ENCODE measurements at regions of chr16 and their contacts with region 1.

Region 1: DNA sequence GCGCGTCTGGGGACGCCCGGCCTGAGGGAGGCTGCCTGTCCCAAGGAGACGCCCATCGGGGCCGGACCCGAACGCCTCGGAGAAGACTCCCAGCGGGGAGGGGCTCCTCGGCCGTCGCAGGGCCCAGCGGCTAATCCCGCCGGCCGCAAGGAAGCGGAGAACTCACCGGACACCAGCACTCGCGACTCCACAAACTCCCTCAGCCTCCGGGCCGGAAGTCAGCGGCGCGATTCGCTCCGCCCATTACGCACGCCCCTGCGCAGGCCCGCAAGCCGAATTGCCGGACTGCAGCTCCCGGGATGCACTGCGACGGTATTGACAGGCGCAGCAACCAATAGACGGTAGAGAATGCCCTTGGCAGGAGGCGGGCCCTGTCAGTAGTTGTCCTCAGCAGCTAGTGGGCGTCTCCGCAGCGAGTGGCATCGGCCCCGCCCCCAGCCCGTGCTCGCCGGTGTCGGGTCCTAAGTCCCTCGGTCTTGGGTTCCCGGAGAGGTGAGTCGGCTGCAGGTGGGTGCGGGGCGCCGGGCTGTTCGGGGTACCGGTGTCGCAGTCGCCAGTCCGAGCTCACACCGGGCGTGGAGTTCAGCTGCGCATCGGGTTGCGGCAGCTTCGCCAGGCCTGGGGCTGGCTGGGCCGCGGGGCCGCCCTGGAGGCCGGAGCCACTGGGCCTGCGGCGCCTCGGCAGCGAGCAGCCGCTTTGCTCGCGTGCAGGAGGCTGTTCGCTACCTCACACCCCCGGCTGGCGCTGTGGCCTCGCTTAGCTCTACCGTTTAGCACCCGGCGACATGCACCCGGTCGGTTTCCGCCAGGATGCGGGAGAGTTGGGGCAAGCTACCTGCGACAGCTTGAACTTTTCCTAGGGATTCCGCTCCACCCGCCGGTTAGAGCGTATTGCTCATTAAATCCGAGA is at the starts of genes ZNF174 and ZSCAN32:
- DNase-seq: peak; percentile 98 to 100 (median 98)
- ATAC-seq: peak; percentile 99
- H3K4me3 ChIP-seq: peak within 1 kb of the TSS; percentile 89
- H3K27ac ChIP-seq: peak within 1 kb of the TSS; percentile 81
- H3K4me1 ChIP-seq: peaks cover 2 to 16% of the 10 kb centered on the region in 2 experiments; a peak in 4 of 5 replicates
- H3K27me3 ChIP-seq: no peaks in the 10 kb centered on the region
- CTCF ChIP-seq: no peak
- EP300 ChIP-seq: 0 out of 2 replicates have a peak, but pooled peaks have one; percentile 3
- POLR2A ChIP-seq: peak; percentile 86
- RAD21 ChIP-seq: peak in 1 of 2 experiments; percentile 19; a peak in 2 of 4 replicates
- polyA plus RNA-seq, gene ZNF174: 5.1 to 8.3 TPM
- polyA plus RNA-seq, gene ZSCAN32: 16.0 to 24.6 TPM

Region 2: DNA sequence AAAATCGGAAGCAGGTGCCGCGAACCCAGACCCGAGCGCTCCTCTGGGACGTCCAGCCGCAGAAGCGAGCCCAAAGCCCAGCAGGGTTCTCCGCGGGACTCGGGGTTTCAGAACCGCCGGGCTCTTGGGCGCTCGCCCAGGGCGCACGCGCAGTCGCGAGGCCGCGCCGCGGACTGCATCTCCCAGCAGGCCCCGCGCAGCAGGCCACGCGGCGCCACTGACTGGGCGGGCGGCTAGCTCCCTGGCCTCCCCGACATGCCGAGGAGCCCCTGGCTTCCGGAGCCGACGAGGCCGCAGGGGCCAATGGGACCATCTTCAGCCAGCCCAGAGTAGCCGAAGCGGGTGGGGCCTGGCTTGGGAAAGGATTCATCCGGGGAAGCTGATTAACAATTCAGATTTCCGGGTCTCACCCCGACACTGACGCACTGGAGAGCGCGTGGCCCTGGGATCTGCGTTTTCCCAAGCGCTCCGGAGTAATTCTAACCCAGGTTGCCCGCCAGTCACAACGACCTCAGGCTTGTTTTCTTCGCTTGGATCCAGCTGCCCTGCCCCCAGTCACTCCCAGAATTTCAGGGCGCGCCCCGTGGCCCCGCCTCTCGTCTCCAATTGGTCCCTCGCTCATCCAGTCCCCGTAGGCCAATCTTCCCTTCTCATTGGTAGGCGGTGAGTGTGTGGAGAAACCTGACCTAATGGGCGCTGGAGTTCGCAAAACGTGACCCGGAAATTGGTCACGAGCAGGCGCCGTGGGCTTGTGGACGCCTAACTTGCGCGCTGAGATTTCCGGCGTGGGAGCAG is 118.1 kb before region 1 on chr16 and contains the start of gene ZNF263:
- CTCF ChIA-PET with region 1: no interaction called
- POLR2A ChIA-PET with region 1: interaction called, 15 read pairs
- in situ Hi-C with region 1: no loop called
- intact Hi-C with region 1: no loop called
- DNase-seq: peak; percentile 94 to 98 (median 97)
- ATAC-seq: peak; percentile 97
- H3K4me3 ChIP-seq: peak within 1 kb of the TSS; percentile 93
- H3K27ac ChIP-seq: peak within 1 kb of the TSS; percentile 100
- H3K4me1 ChIP-seq: peaks cover 8 to 22% of the 10 kb centered on the region in 2 experiments; a peak in 4 of 5 replicates
- H3K27me3 ChIP-seq: no peaks in the 10 kb centered on the region
- CTCF ChIP-seq: no peak
- EP300 ChIP-seq: no peak; the same call in 1 of the 2 replicates
- POLR2A ChIP-seq: peak; percentile 91
- RAD21 ChIP-seq: no peak
- polyA plus RNA-seq, gene ZNF263: 4.6 to 4.8 TPM

Region 3: GRCh38 chr16:3305109-3306068 is 95.6 kb before region 1 on chr16 and contains the starts of genes TIGD7 and ZNF75A:
- CTCF ChIA-PET with region 1: no interaction called
- POLR2A ChIA-PET with region 1: interaction called, 6 read pairs
- in situ Hi-C with region 1: no loop called
- intact Hi-C with region 1: loop called (anchors 10 kb)
- DNase-seq: peak; percentile 81 to 91 (median 84)
- ATAC-seq: peak; percentile 99
- H3K4me3 ChIP-seq: peak within 1 kb of the TSS; percentile 73
- H3K27ac ChIP-seq: peak within 1 kb of the TSS; percentile 94
- H3K4me1 ChIP-seq: peaks cover 0 to 16% of the 10 kb centered on the region in 2 experiments; a peak in 4 of 5 replicates
- H3K27me3 ChIP-seq: no peaks in the 10 kb centered on the region
- CTCF ChIP-seq: peak in 1 of 3 experiments; percentile 16; a peak in 1 of 6 replicates
- EP300 ChIP-seq: no peak
- POLR2A ChIP-seq: peak; percentile 95
- RAD21 ChIP-seq: no peak; a peak in 1 of 4 replicates
- polyA plus RNA-seq, gene TIGD7: 0.84 to 2.0 TPM
- polyA plus RNA-seq, gene ZNF75A: 7.2 to 10.1 TPM

Region 4: DNA sequence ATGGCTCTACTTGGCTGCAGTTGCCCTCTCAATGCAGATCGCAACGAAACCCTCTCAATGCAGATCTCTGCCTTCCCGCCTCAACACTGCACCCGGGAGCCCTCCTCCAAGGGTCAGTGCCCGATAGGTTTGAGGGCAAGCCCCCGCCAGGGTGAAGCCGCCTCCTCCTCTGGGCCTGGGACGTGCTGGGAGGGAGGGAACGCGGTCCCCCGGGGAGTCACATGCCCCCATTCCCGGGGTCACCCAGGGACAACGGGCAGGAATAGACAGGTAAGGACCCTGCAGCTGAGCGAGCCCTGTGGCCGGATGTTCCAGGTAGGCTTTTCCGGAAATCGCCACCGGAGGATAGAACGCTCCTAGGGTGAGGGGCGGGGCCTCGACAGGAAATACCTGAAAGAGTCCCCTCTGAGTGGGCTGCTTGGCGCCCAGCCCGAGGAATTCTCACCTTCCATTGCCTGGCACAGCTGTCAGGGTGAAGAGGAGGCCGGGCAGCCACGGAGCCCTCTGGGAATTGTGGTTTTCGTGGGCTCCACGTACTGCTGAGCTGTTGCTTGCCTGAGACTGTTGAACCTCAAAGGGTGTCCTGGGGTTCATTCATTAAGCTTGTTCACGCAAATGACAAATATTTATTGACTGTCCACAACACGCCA is 12.8 kb after region 1 on chr16:
- CTCF ChIA-PET with region 1: no interaction called
- POLR2A ChIA-PET with region 1: interaction called, 10 read pairs
- in situ Hi-C with region 1: no loop called
- intact Hi-C with region 1: no loop called
- DNase-seq: no peak
- ATAC-seq: no peak
- H3K4me3 ChIP-seq: no peak overlapping the region
- H3K27ac ChIP-seq: no peak overlapping the region
- H3K4me1 ChIP-seq: no peaks in the 10 kb centered on the region
- H3K27me3 ChIP-seq: no peaks in the 10 kb centered on the region
- CTCF ChIP-seq: no peak
- EP300 ChIP-seq: no peak
- POLR2A ChIP-seq: no peak
- RAD21 ChIP-seq: no peak

Region 5: DNA sequence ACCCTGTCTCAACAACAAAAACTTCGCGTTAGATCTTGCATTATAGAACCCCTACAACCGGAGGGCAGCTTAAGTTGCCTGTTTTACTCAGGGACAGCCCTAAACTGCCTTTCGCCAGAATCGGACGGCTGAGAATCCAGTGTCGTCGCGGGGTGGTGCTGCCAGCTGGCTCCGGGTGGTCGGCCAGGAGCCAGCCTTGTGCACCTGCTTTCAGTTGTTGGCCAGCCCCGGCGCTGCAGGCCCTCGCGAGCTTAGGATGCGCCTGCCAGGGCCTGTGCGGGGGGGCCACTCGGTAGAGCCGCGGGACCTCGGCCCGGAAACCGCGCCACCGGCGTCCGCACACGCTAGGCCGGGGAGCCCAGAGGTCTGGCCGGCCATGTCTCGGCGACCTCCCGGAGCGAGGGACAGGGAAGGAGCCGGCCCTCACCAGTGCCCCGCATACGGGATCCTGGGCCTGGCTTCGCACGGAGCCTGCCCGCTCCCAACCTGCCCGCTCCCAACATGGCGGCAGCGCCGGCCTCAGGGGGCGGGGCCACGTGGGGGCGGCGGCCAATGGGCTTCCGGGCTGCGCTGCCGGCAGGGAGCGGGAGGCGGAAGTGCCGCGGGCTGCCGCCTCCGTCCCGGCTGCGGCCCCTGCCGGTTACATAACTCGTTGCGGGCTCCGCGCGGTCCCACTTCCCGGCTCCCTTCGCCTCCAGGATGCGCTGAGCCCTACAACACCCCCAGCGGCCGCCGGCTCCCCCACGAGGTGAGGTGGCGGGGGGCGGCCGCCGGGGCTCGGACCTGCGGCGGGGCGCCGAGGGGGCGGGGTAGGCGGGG is 56.6 kb after region 1 on chr16:
- CTCF ChIA-PET with region 1: no interaction called
- POLR2A ChIA-PET with region 1: interaction called, 3 read pairs
- in situ Hi-C with region 1: no loop called
- intact Hi-C with region 1: loop called (anchors 2 kb)
- DNase-seq: peak; percentile 91 to 99 (median 99)
- ATAC-seq: peak; percentile 98
- H3K4me3 ChIP-seq: peak overlapping the region; percentile 81
- H3K27ac ChIP-seq: peak overlapping the region; percentile 99
- H3K4me1 ChIP-seq: peaks cover 23 to 28% of the 10 kb centered on the region in 2 experiments; a peak in 4 of 5 replicates
- H3K27me3 ChIP-seq: no peaks in the 10 kb centered on the region
- CTCF ChIP-seq: peak; percentile 35 to 93 (median 79); a peak in 4 of 6 replicates
- EP300 ChIP-seq: no peak
- POLR2A ChIP-seq: peak; percentile 92
- RAD21 ChIP-seq: peak; percentile 49 to 53